BJ (cell line): ENCODE measurements at regions of chr9 and their contacts with region 1.

Region 1: GRCh38 chr9:94554439-94555391 is at the start of gene PCAT7:
- DNase-seq: no peak
- H3K4me3 ChIP-seq: no peak within 1 kb of the TSS
- H3K27me3 ChIP-seq: no peaks in the 10 kb centered on the region
- CTCF ChIP-seq: peak; percentile 32
- polyA plus RNA-seq, gene PCAT7: 0.04 TPM in 2 replicates

Region 2: GRCh38 chr9:95242613-95243012 is 687.9 kb after region 1 on chr9:
- CTCF ChIA-PET with region 1: no interaction called
- POLR2A ChIA-PET with region 1: no interaction called
- DNase-seq: no peak
- H3K4me3 ChIP-seq: no peak overlapping the region
- H3K27me3 ChIP-seq: no peaks in the 10 kb centered on the region
- CTCF ChIP-seq: no peak

Region 3: GRCh38 chr9:96169484-96169883 is 1614.8 kb after region 1 on chr9:
- CTCF ChIA-PET with region 1: no interaction called
- POLR2A ChIA-PET with region 1: interaction called, 12 read pairs
- DNase-seq: no peak
- H3K4me3 ChIP-seq: no peak overlapping the region
- H3K27me3 ChIP-seq: peaks cover 2% of the 10 kb centered on the region; the same call in 1 of the 2 replicates
- CTCF ChIP-seq: no peak